Activated CD4-positive, alpha-beta T cell treated with anti-CD3 and anti-CD28 coated beads for 36 hours (primary cell): ENCODE measurements at regions of chr15 and their contacts with region 1.

Region 1: DNA sequence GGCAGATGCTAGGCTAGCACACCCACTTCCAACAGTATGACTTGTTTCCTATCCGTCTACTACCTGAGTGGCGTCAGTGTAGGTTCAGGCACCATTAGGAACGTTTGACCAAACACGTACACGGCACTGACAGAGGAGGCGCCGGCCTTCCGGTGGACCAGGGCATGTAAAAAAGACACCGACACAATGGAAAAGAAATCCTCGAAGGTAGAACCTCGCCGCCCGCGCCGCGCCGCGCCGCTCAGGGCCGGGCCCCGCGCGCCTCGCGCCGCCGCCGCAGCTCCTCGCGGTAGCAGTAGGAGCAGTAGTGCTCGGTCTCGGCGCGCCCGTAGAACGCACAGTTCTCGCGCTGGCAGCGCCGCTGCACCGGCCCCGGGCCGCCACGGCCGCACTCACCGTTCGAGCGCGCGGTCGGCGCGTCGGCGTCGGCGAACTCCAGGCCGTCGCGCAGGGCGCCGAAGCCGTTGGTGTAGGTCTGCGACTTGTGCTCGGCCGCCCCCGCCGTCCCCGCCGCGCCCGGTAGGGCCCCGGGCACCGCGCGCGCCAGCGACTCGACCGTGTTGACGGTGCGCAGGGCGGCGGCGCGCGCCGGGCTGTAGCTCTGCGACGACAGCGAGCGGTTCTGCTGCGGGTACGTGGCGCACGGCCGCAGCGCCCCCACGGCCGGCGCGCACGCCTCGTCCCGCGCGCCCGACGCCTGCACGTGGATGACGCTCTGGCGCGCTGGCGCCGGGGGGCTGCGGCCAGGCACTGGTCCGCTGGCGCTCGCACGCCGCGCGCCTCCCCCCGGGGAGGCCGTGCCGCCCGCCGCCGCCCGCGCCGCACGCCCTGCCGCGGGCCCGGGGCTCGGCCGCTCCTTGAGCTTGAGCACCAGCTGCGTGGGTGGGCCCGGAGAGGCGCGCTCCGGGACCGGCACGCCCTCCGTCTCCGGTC is 156.7 kb downstream of the KLF13 start:
- DNase-seq: peak; percentile 84
- ATAC-seq: peak; percentile 80
- H3K4me3 Mint-ChIP-seq: peak overlapping the region; percentile 85
- H3K27ac Mint-ChIP-seq: peak overlapping the region; percentile 94
- H3K4me1 Mint-ChIP-seq: peaks cover 60% of the 10 kb centered on the region
- H3K27me3 Mint-ChIP-seq: peaks cover 3% of the 10 kb centered on the region

Region 2: DNA sequence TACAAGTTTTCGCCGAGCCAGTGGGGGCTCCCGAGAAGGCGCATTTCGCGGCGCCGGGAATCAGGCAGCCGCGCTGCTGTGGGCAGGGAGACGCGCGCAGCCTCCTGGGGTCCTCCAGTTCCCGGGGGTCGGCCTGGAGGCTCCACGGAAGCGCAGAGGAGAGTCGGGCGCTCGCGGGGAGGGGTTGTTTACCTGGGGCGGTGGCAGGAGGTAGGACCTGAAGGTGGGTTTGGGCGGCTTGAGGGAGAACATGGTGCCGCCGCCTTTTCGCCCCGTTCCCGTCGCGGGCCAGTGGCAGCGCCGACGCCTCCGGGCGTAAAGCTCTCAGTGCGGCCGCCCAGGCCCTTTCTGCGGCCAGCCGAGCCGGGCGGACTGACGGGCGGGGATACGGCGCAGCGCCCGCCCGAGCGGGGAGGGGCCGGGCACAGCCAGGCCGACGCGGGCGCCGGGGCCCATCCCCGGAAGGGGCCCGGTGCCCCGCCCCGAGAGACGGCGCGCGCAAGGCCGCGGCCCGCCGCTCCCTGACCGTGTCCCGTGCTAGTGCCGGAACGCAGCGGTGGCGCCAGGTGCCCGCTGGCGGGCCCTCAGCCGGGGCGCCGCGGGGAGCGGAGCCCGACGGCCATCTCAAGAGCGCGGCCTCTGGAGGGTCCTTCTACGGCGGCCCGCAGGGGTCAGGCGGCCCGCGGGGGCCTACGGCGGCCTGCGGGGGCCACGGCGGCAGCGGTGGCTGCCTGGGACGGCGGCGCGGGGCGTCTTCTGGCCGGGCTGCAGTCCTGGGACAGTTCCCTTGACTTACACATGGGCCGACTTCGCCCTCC is 491.9 kb before region 1 on chr15 and contains the start of gene MTMR10:
- CTCF ChIA-PET with region 1: no interaction called
- POLR2A ChIA-PET with region 1: no interaction called
- intact Hi-C with region 1: loop called (anchors 2 to 10 kb)
- DNase-seq: peak; percentile 80
- ATAC-seq: peak; percentile 93
- H3K4me3 Mint-ChIP-seq: peak within 1 kb of the TSS; percentile 95
- H3K27ac Mint-ChIP-seq: peak within 1 kb of the TSS; percentile 84
- H3K4me1 Mint-ChIP-seq: peaks cover 27% of the 10 kb centered on the region
- H3K27me3 Mint-ChIP-seq: peaks cover 1% of the 10 kb centered on the region
- total RNA-seq, gene MTMR10: 10.1 to 17.6 TPM

Region 3: DNA sequence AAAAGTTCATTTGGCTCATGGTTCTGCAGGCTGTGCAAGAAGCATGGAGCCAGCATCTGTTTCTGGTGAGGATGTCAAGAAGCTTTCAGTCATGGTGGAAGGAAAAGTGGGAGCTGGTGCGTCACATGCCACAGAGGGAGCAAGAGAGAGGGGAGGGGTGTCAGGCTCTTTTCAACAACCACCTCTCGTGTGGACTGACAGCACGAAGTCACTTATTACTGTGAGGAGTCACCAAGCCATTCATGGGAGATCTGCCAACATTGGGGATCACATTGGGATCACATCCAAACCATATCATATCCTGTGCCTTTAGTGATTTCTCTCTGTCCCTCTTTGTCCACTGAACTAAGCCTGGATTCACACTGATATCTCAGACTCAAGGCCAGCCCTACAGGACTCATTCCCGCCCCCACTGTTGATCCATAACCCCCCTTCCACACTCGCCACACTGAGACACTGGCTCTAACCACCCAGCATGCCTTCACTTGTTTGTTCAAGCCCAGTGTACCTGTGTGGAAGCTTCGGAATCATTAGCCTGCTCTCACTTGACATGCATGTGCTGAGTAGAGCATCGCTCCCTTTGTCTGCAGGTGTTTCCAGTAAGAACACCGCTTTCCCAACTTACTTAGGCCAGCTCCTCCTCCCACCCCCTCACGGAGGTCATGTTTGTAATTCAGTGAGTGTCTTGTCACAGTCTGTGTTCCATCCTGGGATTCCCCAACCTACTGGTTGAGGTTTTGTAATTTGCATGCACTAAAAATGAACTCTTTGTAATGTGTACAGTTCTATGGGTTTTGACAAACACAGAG is 24.5 kb before region 1 on chr15:
- CTCF ChIA-PET with region 1: interaction called, 16 read pairs
- POLR2A ChIA-PET with region 1: interaction called, 7 read pairs
- intact Hi-C with region 1: loop called (anchors 1 kb)
- DNase-seq: peak; percentile 83
- ATAC-seq: peak; percentile 93
- H3K4me3 Mint-ChIP-seq: peak overlapping the region; percentile 70
- H3K27ac Mint-ChIP-seq: peak overlapping the region; percentile 92
- H3K4me1 Mint-ChIP-seq: peaks cover 45% of the 10 kb centered on the region
- H3K27me3 Mint-ChIP-seq: no peaks in the 10 kb centered on the region

Region 4: DNA sequence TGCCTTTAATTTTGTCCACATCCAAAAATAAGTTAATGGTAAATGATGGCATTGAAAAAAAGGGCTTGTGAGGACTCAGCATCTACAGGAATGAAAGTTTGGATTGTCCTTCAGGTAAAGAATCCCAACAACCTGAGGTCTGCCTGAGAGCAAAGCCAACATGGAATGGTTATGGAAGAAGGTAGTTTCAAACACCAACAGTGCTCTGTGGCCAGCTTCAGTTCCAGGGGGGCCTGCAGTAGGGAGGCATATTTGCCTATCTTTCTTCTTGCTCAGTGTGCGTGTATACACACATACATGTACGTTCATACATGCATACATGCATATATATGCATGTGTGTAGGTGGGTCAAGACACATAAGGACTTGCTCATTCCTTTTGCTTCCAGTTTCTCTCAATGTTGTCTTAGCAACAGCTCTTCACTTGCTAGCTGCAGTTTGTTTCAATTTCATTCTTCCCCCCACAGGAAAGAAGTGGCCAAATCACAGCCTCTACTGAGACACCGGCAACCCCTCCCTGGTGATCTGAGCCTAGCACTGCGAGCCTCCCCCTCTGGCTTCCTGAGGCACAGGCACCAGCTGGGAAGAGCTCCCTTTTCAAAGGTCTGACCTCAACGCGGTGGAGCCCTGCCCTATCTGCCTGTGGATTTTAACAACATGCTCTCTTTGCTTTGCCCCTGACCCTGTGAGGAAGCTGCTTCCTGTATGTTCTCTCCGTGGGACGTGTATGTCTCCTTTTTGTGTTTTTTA is 10.5 kb before region 1 on chr15:
- CTCF ChIA-PET with region 1: interaction called, 49 read pairs
- POLR2A ChIA-PET with region 1: no interaction called
- intact Hi-C with region 1: loop called in 1 of 2 experiments (anchors 1 kb)
- DNase-seq: peak; percentile 74
- ATAC-seq: peak; percentile 93
- H3K4me3 Mint-ChIP-seq: peak overlapping the region; percentile 70
- H3K27ac Mint-ChIP-seq: peak overlapping the region; percentile 95
- H3K4me1 Mint-ChIP-seq: peaks cover 41% of the 10 kb centered on the region
- H3K27me3 Mint-ChIP-seq: no peaks in the 10 kb centered on the region

Region 5: DNA sequence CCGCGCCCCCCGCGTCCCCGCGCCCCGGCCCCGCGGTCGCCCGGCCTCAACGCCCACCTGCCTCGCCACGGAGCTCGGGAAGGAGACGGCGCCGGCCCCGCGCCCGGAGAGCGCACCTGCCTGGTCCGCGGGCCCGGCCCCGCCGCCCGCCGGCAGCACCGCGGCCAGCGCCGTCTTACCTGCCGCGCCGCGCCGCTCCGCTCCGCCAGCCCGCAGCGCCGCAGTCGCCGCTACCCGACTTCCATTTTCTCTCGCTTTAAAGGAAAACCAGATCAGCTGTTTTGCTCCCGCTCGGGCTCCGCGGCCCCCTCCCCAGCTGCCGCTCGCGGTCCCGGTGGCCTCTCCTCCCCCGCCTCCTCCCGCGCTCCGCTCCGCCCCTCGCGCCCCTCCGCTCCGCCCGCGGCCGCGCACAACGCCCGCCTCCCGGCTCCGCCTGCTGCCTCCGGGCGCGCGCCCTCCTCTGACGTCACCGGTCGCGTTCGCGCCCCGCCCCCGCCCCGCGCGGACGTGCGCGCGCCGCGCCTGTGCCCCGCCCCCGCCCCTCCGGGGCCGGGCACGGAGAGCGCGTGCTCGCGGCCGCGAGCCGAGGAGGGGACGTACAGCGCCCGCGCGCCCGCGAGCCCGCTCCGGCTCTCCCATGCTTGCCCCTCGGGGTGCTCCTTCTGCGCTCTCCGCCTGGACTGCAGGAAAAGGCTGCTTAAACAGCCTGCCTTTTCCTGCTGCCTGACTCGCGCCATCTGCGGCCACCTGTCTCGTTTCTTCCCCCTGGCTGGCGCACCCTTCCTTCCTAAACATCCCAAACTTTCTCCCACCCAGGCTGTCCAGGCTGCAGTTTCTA is 387.2 kb after region 1 on chr15:
- CTCF ChIA-PET with region 1: no interaction called
- POLR2A ChIA-PET with region 1: no interaction called
- intact Hi-C with region 1: no loop called
- DNase-seq: peak; percentile 90
- ATAC-seq: peak; percentile 88
- H3K4me3 Mint-ChIP-seq: peak within 1 kb of the TSS; percentile 87
- H3K27ac Mint-ChIP-seq: peak within 1 kb of the TSS; percentile 79
- H3K4me1 Mint-ChIP-seq: peaks cover 10% of the 10 kb centered on the region
- H3K27me3 Mint-ChIP-seq: peaks cover 9% of the 10 kb centered on the region